CD8-positive, alpha-beta T cell (primary cell): ENCODE measurements at regions of chr10 and their contacts with region 1.

Region 1: GRCh38 chr10:110497438-110498086 is at the start of gene DUSP5:
- DNase-seq: peak; percentile 89 to 98 (median 94)
- ATAC-seq: peak; percentile 92
- H3K4me3 ChIP-seq: peak within 1 kb of the TSS; percentile 67 to 91
- H3K4me3 Mint-ChIP-seq: peak within 1 kb of the TSS; percentile 91
- H3K27ac ChIP-seq: peak within 1 kb of the TSS; percentile 50 to 63
- H3K27ac Mint-ChIP-seq: peak within 1 kb of the TSS; percentile 91
- H3K4me1 ChIP-seq: peaks cover 41% of the 10 kb centered on the region
- H3K4me1 Mint-ChIP-seq: peaks cover 50% of the 10 kb centered on the region
- H3K27me3 ChIP-seq: no peaks in the 10 kb centered on the region
- H3K27me3 Mint-ChIP-seq: no peaks in the 10 kb centered on the region
- CTCF ChIP-seq: no peak
- total RNA-seq, gene DUSP5: 69.8 TPM

Region 2: GRCh38 chr10:109922976-109923921 is 574.3 kb before region 1 on chr10 and contains the start of gene XPNPEP1:
- CTCF ChIA-PET with region 1: no interaction called
- POLR2A ChIA-PET with region 1: no interaction called
- intact Hi-C with region 1: loop called in 1 of 2 experiments (anchors 5 kb)
- DNase-seq: peak; percentile 55 to 93 (median 78)
- ATAC-seq: peak; percentile 90
- H3K4me3 ChIP-seq: peak within 1 kb of the TSS; percentile 75 to 80
- H3K4me3 Mint-ChIP-seq: peak within 1 kb of the TSS; percentile 87
- H3K27ac ChIP-seq: peak within 1 kb of the TSS; percentile 76 to 91
- H3K27ac Mint-ChIP-seq: peak within 1 kb of the TSS; percentile 92
- H3K4me1 ChIP-seq: peaks cover 37% of the 10 kb centered on the region
- H3K4me1 Mint-ChIP-seq: peaks cover 52% of the 10 kb centered on the region
- H3K27me3 ChIP-seq: no peaks in the 10 kb centered on the region
- H3K27me3 Mint-ChIP-seq: no peaks in the 10 kb centered on the region
- CTCF ChIP-seq: no peak
- total RNA-seq, gene XPNPEP1: 50.4 to 54.7 TPM

Region 3: GRCh38 chr10:109987452-109988211 is 509.9 kb before region 1 on chr10:
- CTCF ChIA-PET with region 1: no interaction called
- POLR2A ChIA-PET with region 1: no interaction called
- intact Hi-C with region 1: no loop called
- DNase-seq: no peak
- ATAC-seq: no peak
- H3K4me3 ChIP-seq: no peak overlapping the region
- H3K4me3 Mint-ChIP-seq: no peak overlapping the region
- H3K27ac ChIP-seq: no peak overlapping the region
- H3K27ac Mint-ChIP-seq: no peak overlapping the region
- H3K4me1 ChIP-seq: no peaks in the 10 kb centered on the region
- H3K4me1 Mint-ChIP-seq: no peaks in the 10 kb centered on the region
- H3K27me3 ChIP-seq: no peaks in the 10 kb centered on the region
- H3K27me3 Mint-ChIP-seq: no peaks in the 10 kb centered on the region
- CTCF ChIP-seq: no peak

Region 4: DNA sequence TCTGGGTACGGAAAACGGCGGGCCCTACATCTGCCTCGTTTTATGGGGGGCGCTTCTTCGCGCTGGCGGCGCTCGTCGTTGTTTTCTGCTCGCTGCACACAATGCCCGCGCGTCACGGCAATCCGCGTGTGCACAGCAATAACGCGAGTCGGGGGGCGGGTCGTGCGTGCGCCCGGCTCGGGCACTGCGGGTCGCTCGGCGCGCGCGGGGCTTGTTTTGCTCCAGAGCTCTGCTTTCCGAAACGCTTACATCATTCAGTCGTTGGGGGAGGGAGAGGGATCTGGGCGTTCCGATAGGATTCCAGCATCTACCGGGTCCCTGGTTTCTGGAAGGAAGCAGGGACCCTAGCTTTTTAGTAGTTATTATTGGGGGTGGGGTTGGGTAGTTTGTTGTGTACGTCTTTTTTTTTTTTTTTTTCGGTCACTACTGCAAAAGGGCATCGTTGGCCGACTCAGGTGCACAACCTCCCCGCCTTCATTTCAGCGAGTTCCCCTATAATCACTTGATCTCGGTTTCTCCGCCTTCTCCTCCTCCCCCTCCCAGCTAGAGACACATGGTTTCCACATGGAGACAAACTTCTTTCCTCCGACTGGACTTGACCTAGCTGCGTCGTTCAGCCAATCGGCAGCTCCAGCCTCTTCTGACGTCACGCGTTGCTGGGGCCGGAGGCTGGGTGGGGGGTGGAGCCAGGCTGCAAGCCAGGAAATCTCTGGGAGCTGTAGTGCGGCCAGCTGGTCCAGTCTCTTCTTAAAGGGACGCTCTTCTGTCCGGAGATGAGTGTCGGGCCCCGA is 286.7 kb before region 1 on chr10:
- CTCF ChIA-PET with region 1: no interaction called
- POLR2A ChIA-PET with region 1: interaction called, 8 read pairs
- intact Hi-C with region 1: loop called in 1 of 2 experiments (anchors 5 kb)
- DNase-seq: peak; percentile 77 to 94 (median 90)
- ATAC-seq: peak; percentile 48
- H3K4me3 ChIP-seq: peak overlapping the region; percentile 59 to 91
- H3K4me3 Mint-ChIP-seq: peak overlapping the region; percentile 94
- H3K27ac ChIP-seq: peak overlapping the region; percentile 60 to 90
- H3K27ac Mint-ChIP-seq: peak overlapping the region; percentile 99
- H3K4me1 ChIP-seq: peaks cover 22% of the 10 kb centered on the region
- H3K4me1 Mint-ChIP-seq: peaks cover 47% of the 10 kb centered on the region
- H3K27me3 ChIP-seq: peaks cover 0 to 13% of the 10 kb centered on the region in 2 experiments
- H3K27me3 Mint-ChIP-seq: peaks cover 17% of the 10 kb centered on the region
- CTCF ChIP-seq: no peak

Region 5: GRCh38 chr10:110414563-110415309 is 82.8 kb before region 1 on chr10:
- CTCF ChIA-PET with region 1: no interaction called
- POLR2A ChIA-PET with region 1: interaction called, 4 read pairs
- intact Hi-C with region 1: loop called (anchors 1 to 2 kb)
- DNase-seq: peak; percentile 66 to 97 (median 86)
- ATAC-seq: peak; percentile 95
- H3K4me3 ChIP-seq: no peak overlapping the region
- H3K4me3 Mint-ChIP-seq: peak overlapping the region; percentile 33
- H3K27ac ChIP-seq: peak overlapping the region in 1 of 2 experiments; percentile 38
- H3K27ac Mint-ChIP-seq: peak overlapping the region; percentile 82
- H3K4me1 ChIP-seq: peaks cover 26% of the 10 kb centered on the region
- H3K4me1 Mint-ChIP-seq: peaks cover 29% of the 10 kb centered on the region
- H3K27me3 ChIP-seq: no peaks in the 10 kb centered on the region
- H3K27me3 Mint-ChIP-seq: peaks cover 2% of the 10 kb centered on the region
- CTCF ChIP-seq: no peak

Region 6: GRCh38 chr10:110567201-110568054 is 69.9 kb after region 1 on chr10 and contains the start of gene SMC3:
- CTCF ChIA-PET with region 1: no interaction called
- POLR2A ChIA-PET with region 1: no interaction called
- intact Hi-C with region 1: loop called (anchors 1 to 2 kb)
- DNase-seq: peak; percentile 83 to 95 (median 90)
- ATAC-seq: peak; percentile 89
- H3K4me3 ChIP-seq: peak within 1 kb of the TSS; percentile 92 to 93
- H3K4me3 Mint-ChIP-seq: peak within 1 kb of the TSS; percentile 97
- H3K27ac ChIP-seq: peak within 1 kb of the TSS; percentile 85 to 86
- H3K27ac Mint-ChIP-seq: peak within 1 kb of the TSS; percentile 96
- H3K4me1 ChIP-seq: peaks cover 44% of the 10 kb centered on the region
- H3K4me1 Mint-ChIP-seq: peaks cover 44% of the 10 kb centered on the region
- H3K27me3 ChIP-seq: no peaks in the 10 kb centered on the region
- H3K27me3 Mint-ChIP-seq: peaks cover 12% of the 10 kb centered on the region
- CTCF ChIP-seq: no peak
- total RNA-seq, gene SMC3: 35.1 to 37.9 TPM

Region 7: DNA sequence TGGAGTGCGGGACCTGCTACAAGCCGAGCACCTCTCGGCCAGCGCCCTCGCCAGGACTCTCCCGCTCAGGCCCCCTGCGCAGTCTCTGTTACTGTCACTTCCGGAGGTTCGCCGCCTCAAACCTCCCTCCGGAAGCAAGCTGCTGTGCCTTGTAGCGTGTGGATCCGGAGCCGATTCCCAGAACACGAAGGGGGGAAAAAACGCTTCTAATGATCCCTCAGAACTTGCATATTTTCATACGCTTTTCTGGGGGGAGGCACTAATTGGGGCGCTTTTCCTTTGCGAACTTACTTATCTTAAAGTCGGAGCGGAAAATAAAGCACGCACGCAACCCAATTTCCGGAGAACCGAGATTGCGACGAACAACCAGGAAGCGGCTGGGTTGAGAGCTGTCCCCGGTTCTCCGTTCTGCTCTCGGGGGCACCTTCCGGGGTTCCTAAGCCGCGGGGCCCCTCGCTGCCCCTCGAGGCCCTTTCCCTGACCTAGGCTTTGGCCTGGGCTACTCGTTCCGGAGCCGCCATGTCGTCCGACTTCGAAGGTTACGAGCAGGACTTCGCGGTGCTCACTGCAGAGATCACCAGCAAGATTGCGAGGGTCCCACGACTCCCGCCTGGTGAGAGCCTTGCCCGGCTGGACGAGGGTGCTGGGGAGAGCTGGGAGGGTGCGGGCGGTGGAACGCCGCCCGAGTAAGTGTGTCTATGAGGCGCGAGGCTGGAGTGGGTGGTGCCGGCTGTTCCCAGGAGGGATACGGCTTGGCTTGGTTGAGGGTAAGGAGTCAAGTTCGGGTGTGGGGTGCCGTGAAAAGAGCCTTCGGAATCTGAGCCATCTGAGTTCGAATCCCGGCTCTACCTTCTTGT is 1949.5 kb after region 1 on chr10 and contains the starts of genes VTI1A and ZDHHC6:
- CTCF ChIA-PET with region 1: no interaction called
- POLR2A ChIA-PET with region 1: no interaction called
- intact Hi-C with region 1: loop called in 1 of 2 experiments (anchors 10 kb)
- DNase-seq: peak; percentile 68 to 92 (median 85)
- ATAC-seq: peak; percentile 88
- H3K4me3 ChIP-seq: peak within 1 kb of the TSS; percentile 93 to 96
- H3K4me3 Mint-ChIP-seq: peak within 1 kb of the TSS; percentile 94
- H3K27ac ChIP-seq: peak within 1 kb of the TSS; percentile 91 to 92
- H3K27ac Mint-ChIP-seq: peak within 1 kb of the TSS; percentile 95
- H3K4me1 ChIP-seq: peaks cover 24% of the 10 kb centered on the region
- H3K4me1 Mint-ChIP-seq: peaks cover 66% of the 10 kb centered on the region
- H3K27me3 ChIP-seq: no peaks in the 10 kb centered on the region
- H3K27me3 Mint-ChIP-seq: no peaks in the 10 kb centered on the region
- CTCF ChIP-seq: no peak
- total RNA-seq, gene VTI1A: 59.0 to 62.7 TPM
- total RNA-seq, gene ZDHHC6: 41.4 to 41.7 TPM